ENCODE measurements at regions of chr12 and their contacts with region 1.

Region 1: DNA sequence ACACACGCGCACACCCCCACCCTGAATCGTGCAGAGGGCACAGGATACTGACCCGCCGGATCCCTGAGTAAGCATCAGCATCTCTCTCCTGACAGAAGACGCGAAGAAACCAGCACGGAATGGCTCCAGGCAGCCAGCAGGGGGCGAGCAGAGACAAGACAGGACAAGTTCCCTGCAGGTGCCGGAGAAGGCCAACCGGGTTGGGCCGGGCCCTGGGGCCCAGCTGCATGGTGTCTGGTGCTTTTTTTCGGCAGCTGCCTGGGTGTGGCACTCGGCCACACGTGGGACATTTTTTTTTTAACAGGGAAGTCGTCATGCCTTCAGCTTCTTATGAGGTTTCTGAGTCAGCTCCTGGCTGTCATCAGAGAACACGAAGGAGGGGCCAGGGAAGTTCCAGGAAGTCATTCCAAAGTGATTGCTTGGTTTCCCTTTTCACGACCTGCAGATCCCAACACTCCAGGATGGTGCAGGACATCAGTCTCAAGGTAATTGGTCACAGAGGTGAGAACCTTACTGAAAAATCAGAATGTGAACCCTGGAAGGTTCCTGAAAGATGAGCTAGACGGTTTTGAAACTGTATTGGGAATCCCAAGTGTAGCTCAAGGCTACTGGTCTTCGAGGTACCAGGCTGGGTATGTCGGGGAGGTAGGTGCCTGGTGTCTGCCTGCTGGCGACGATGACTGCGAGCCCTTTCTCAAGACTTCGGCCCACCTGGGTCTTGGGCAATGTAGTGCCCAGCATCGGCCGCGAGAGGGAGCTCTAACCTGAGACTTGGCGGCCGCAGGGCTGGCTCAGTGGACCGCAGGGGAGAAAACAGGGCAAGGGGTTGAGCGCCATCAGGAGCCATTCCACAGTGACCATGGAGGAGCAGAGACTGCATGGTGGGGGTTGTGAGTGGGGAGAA is 190.8 kb upstream of the PRMT8 start:
- DNase-seq: peak; percentile 96
- ATAC-seq: peak; percentile 61
- H3K4me3 ChIP-seq: peak overlapping the region; percentile 59
- H3K27ac ChIP-seq: peak overlapping the region; percentile 95
- H3K4me1 ChIP-seq: peaks cover 39% of the 10 kb centered on the region
- H3K27me3 ChIP-seq: no peaks in the 10 kb centered on the region
- CTCF ChIP-seq: peak; percentile 91

Region 2: GRCh38 chr12:3333583-3333982 is 33.4 kb after region 1 on chr12:
- CTCF ChIA-PET with region 1: no interaction called
- POLR2A ChIA-PET with region 1: no interaction called
- intact Hi-C with region 1: no loop called
- DNase-seq: peak; percentile 22
- ATAC-seq: no peak; the same call in 1 of the 2 replicates
- H3K4me3 ChIP-seq: no peak overlapping the region
- H3K27ac ChIP-seq: no peak overlapping the region
- H3K4me1 ChIP-seq: no peaks in the 10 kb centered on the region
- H3K27me3 ChIP-seq: no peaks in the 10 kb centered on the region
- CTCF ChIP-seq: 0 out of 2 replicates have a peak, but pooled peaks have one; percentile 17

Region 3: GRCh38 chr12:3365463-3366411 is 65.6 kb after region 1 on chr12:
- CTCF ChIA-PET with region 1: no interaction called
- POLR2A ChIA-PET with region 1: no interaction called
- intact Hi-C with region 1: loop called (anchors 2 kb)
- DNase-seq: peak; percentile 64
- ATAC-seq: peak; percentile 92
- H3K4me3 ChIP-seq: peak overlapping the region; percentile 66
- H3K27ac ChIP-seq: no peak overlapping the region
- H3K4me1 ChIP-seq: no peaks in the 10 kb centered on the region
- H3K27me3 ChIP-seq: peaks cover 2% of the 10 kb centered on the region; the same call in 1 of the 2 replicates
- CTCF ChIP-seq: no peak

Region 4: DNA sequence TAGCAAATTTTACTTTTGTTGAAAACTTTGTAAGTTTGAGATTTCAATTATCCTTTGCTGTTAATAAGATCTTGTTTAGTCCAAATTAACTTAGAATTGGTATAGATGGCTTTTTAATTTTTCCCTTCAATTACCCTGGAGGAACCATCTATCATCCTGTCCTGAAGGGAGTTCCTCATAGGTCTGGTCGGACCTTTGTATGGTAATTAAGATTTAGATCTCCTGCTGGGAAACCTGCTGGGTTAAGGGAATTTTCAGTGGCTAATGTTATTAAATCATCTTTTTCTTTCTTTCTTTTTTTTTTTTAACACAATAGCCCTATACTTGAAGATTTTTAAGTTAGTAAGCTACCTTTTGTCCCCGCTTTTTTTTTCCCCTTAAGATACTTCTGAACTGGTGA is 127.8 kb after region 1 on chr12:
- CTCF ChIA-PET with region 1: no interaction called
- POLR2A ChIA-PET with region 1: no interaction called
- intact Hi-C with region 1: no loop called
- DNase-seq: no peak
- ATAC-seq: no peak
- H3K4me3 ChIP-seq: no peak overlapping the region
- H3K27ac ChIP-seq: no peak overlapping the region
- H3K4me1 ChIP-seq: no peaks in the 10 kb centered on the region
- H3K27me3 ChIP-seq: no peaks in the 10 kb centered on the region
- CTCF ChIP-seq: no peak

Region 5: DNA sequence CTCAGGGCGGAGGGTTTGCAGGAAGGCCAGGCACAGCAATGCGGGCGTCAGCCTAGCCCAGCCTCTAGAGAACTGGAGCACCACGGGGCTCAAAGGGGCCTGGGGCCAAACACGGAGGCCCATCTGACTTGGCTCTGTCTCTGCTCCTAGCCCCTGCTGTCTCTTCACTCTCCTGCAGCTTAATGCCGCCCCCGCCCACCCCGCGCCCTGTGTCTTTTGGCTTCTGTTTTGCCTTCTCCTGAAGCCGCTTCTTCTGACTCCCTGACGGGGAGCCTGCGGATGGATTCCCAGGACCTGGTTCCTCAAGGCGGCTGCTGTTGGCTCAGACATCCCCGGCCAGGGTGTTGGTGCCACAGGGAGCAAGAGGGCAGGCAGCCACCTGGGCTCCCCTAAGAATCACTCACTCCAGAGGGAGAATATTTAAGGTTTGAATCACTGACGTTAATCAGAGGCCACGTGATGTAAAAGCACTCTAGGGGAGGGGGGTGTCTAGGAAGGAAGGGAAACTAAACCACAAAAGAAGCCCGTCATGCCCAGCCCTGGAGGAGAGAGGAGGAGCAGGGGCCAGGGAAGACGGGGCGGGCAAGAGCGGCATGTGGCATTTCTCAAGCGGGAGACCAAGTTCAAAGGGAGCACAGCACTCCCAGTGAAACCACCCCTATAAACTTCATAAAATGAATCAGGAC is 154.0 kb after region 1 on chr12:
- CTCF ChIA-PET with region 1: no interaction called
- POLR2A ChIA-PET with region 1: no interaction called
- intact Hi-C with region 1: loop called (anchors 2 kb)
- DNase-seq: peak; percentile 94
- ATAC-seq: peak; percentile 84
- H3K4me3 ChIP-seq: 0 out of 2 replicates have a peak overlapping the region, but pooled peaks have one; percentile 9
- H3K27ac ChIP-seq: peak overlapping the region; percentile 60
- H3K4me1 ChIP-seq: peaks cover 25% of the 10 kb centered on the region
- H3K27me3 ChIP-seq: no peaks in the 10 kb centered on the region
- CTCF ChIP-seq: no peak

Region 6: GRCh38 chr12:3523058-3523457 is 222.9 kb after region 1 on chr12:
- CTCF ChIA-PET with region 1: interaction called, 4 read pairs
- POLR2A ChIA-PET with region 1: no interaction called
- intact Hi-C with region 1: loop called (anchors 1 kb)
- DNase-seq: peak; percentile 52
- ATAC-seq: peak; percentile 35
- H3K4me3 ChIP-seq: no peak overlapping the region
- H3K27ac ChIP-seq: no peak overlapping the region
- H3K4me1 ChIP-seq: peaks cover 35% of the 10 kb centered on the region
- H3K27me3 ChIP-seq: no peaks in the 10 kb centered on the region
- CTCF ChIP-seq: peak; percentile 56

Region 7: GRCh38 chr12:3777206-3777809 is 477.1 kb after region 1 on chr12:
- CTCF ChIA-PET with region 1: interaction called, 5 read pairs
- POLR2A ChIA-PET with region 1: no interaction called
- intact Hi-C with region 1: loop called (anchors 1 kb)
- DNase-seq: peak; percentile 64
- ATAC-seq: peak; percentile 64
- H3K4me3 ChIP-seq: no peak overlapping the region
- H3K27ac ChIP-seq: no peak overlapping the region
- H3K4me1 ChIP-seq: no peaks in the 10 kb centered on the region
- H3K27me3 ChIP-seq: peaks cover 18% of the 10 kb centered on the region
- CTCF ChIP-seq: peak; percentile 72

Measured in PC-3 (cell line).